Natural killer cell (primary cell): ENCODE measurements at regions of chr1 and their contacts with region 1.

Region 1: GRCh38 chr1:234963180-234963903 is 165.3 kb downstream of the TOMM20 start:
- DNase-seq: peak; percentile 85 to 96
- ATAC-seq: peak; percentile 84 to 95 (median 93)
- H3K4me3 ChIP-seq: no peak overlapping the region
- H3K4me3 Mint-ChIP-seq: peak overlapping the region; percentile 74
- H3K27ac ChIP-seq: peak overlapping the region; percentile 93
- H3K27ac Mint-ChIP-seq: peak overlapping the region; percentile 92 to 98
- H3K4me1 ChIP-seq: peaks cover 59% of the 10 kb centered on the region
- H3K4me1 Mint-ChIP-seq: peaks cover 41 to 59% of the 10 kb centered on the region in 2 donors
- H3K27me3 ChIP-seq: no peaks in the 10 kb centered on the region
- H3K27me3 Mint-ChIP-seq: no peaks in the 10 kb centered on the region
- CTCF ChIP-seq: no peak

Region 2: GRCh38 chr1:234610348-234611152 is 352.8 kb before region 1 on chr1:
- intact Hi-C with region 1: loop called (anchors 2 kb)
- DNase-seq: peak; percentile 89 to 97
- ATAC-seq: peak; percentile 51 to 77 (median 64)
- H3K4me3 ChIP-seq: peak overlapping the region; percentile 92
- H3K4me3 Mint-ChIP-seq: peak overlapping the region; percentile 94
- H3K27ac ChIP-seq: peak overlapping the region; percentile 99
- H3K27ac Mint-ChIP-seq: peak overlapping the region; percentile 96 to 98
- H3K4me1 ChIP-seq: peaks cover 53% of the 10 kb centered on the region
- H3K4me1 Mint-ChIP-seq: peaks cover 59 to 60% of the 10 kb centered on the region in 2 donors
- H3K27me3 ChIP-seq: no peaks in the 10 kb centered on the region
- H3K27me3 Mint-ChIP-seq: no peaks in the 10 kb centered on the region
- CTCF ChIP-seq: no peak

Region 3: GRCh38 chr1:234772345-234773147 is 190.8 kb before region 1 on chr1:
- intact Hi-C with region 1: loop called (anchors 1 kb)
- DNase-seq: peak; percentile 79 to 94
- ATAC-seq: peak; percentile 86 to 92 (median 91)
- H3K4me3 ChIP-seq: peak overlapping the region; percentile 9
- H3K4me3 Mint-ChIP-seq: peak overlapping the region; percentile 84
- H3K27ac ChIP-seq: peak overlapping the region; percentile 94
- H3K27ac Mint-ChIP-seq: peak overlapping the region in 1 of 2 donors; percentile 99
- H3K4me1 ChIP-seq: peaks cover 71% of the 10 kb centered on the region
- H3K4me1 Mint-ChIP-seq: peaks cover 35 to 43% of the 10 kb centered on the region in 2 donors
- H3K27me3 ChIP-seq: peaks cover 6% of the 10 kb centered on the region
- H3K27me3 Mint-ChIP-seq: peaks cover 0 to 7% of the 10 kb centered on the region in 2 donors
- CTCF ChIP-seq: no peak

Region 4: GRCh38 chr1:234912548-234913277 is 50.6 kb before region 1 on chr1:
- intact Hi-C with region 1: loop called (anchors 1 kb)
- DNase-seq: peak in 1 of 2 donors; percentile 59
- ATAC-seq: peak in 1 of 3 donors; percentile 30
- H3K4me3 ChIP-seq: no peak overlapping the region
- H3K4me3 Mint-ChIP-seq: peak overlapping the region; percentile 55
- H3K27ac ChIP-seq: peak overlapping the region; percentile 64
- H3K27ac Mint-ChIP-seq: peak overlapping the region; percentile 79 to 94
- H3K4me1 ChIP-seq: peaks cover 30% of the 10 kb centered on the region
- H3K4me1 Mint-ChIP-seq: peaks cover 45 to 51% of the 10 kb centered on the region in 2 donors
- H3K27me3 ChIP-seq: no peaks in the 10 kb centered on the region
- H3K27me3 Mint-ChIP-seq: no peaks in the 10 kb centered on the region
- CTCF ChIP-seq: no peak

Region 5: GRCh38 chr1:234978397-234979295 is 15.3 kb after region 1 on chr1:
- intact Hi-C with region 1: loop called (anchors 2 kb)
- DNase-seq: peak in 1 of 2 donors; percentile 79
- ATAC-seq: peak; percentile 12 to 42 (median 25)
- H3K4me3 ChIP-seq: no peak overlapping the region
- H3K4me3 Mint-ChIP-seq: peak overlapping the region; percentile 2
- H3K27ac ChIP-seq: peak overlapping the region; percentile 75
- H3K27ac Mint-ChIP-seq: peak overlapping the region; percentile 20 to 86
- H3K4me1 ChIP-seq: peaks cover 55% of the 10 kb centered on the region
- H3K4me1 Mint-ChIP-seq: peaks cover 37 to 39% of the 10 kb centered on the region in 2 donors
- H3K27me3 ChIP-seq: no peaks in the 10 kb centered on the region
- H3K27me3 Mint-ChIP-seq: peaks cover 4 to 7% of the 10 kb centered on the region in 2 donors
- CTCF ChIP-seq: no peak